BJ (cell line): ENCODE measurements at regions of chrX and their contacts with region 1.

Region 1: GRCh38 chrX:150715184-150715583 is 22.0 kb downstream of the MTMR1 start:
- DNase-seq: no peak
- H3K4me3 ChIP-seq: no peak overlapping the region
- H3K27me3 ChIP-seq: no peaks in the 10 kb centered on the region
- CTCF ChIP-seq: no peak

Region 2: GRCh38 chrX:149938427-149939270 is 776.5 kb before region 1 on chrX and contains the start of gene EOLA2:
- CTCF ChIA-PET with region 1: no interaction called
- POLR2A ChIA-PET with region 1: interaction called, 16 read pairs
- DNase-seq: peak; percentile 94
- H3K4me3 ChIP-seq: peak within 1 kb of the TSS; percentile 82
- H3K27me3 ChIP-seq: no peaks in the 10 kb centered on the region
- CTCF ChIP-seq: peak; percentile 78
- polyA plus RNA-seq, gene EOLA2: 35.8 and 36.8 TPM in 2 replicates

Region 3: GRCh38 chrX:150683536-150684146 is 31.5 kb before region 1 on chrX:
- CTCF ChIA-PET with region 1: interaction called, 12 read pairs
- POLR2A ChIA-PET with region 1: no interaction called
- DNase-seq: no peak
- H3K4me3 ChIP-seq: no peak overlapping the region
- H3K27me3 ChIP-seq: no peaks in the 10 kb centered on the region
- CTCF ChIP-seq: peak; percentile 55